ENCODE measurements at regions of chr17 and their contacts with region 1.

Region 1: GRCh38 chr17:39621523-39622379 is 5.0 kb upstream of the PPP1R1B start:
- DNase-seq: peak; percentile 100
- H3K4me3 Mint-ChIP-seq: peak overlapping the region; percentile 18
- H3K27ac Mint-ChIP-seq: peak overlapping the region; percentile 3
- H3K4me1 Mint-ChIP-seq: peaks cover 55% of the 10 kb centered on the region
- H3K27me3 Mint-ChIP-seq: peaks cover 83% of the 10 kb centered on the region
- CTCF ChIP-seq: no peak

Region 2: DNA sequence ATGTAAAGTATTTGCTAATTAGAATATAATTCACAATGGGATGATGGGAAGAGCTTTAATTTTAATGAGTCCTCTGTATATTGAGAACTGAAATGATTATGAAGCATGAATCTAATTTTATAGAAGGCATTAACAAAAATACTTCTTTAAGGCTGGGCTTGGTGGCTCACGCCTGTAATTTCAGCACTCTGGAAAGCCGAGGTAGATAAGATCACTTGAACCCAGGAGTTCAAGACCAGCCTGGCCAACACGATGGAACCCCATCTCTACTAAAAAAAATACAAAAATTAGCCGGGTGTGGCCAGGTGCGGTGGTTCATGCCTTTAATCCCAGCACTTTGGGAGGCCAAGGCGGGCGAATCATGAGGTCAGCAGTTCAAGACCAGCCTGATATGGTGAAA is 148.4 kb before region 1 on chr17:
- CTCF ChIA-PET with region 1: no interaction called
- intact Hi-C with region 1: no loop called
- DNase-seq: no peak
- H3K4me3 Mint-ChIP-seq: no peak overlapping the region
- H3K27ac Mint-ChIP-seq: no peak overlapping the region
- H3K4me1 Mint-ChIP-seq: no peaks in the 10 kb centered on the region
- H3K27me3 Mint-ChIP-seq: no peaks in the 10 kb centered on the region
- CTCF ChIP-seq: no peak

Region 3: GRCh38 chr17:39653662-39654331 is 32.0 kb after region 1 on chr17:
- CTCF ChIA-PET with region 1: interaction called, 42,089 read pairs
- intact Hi-C with region 1: loop called (anchors 1 kb)
- DNase-seq: peak; percentile 100
- H3K4me3 Mint-ChIP-seq: no peak overlapping the region
- H3K27ac Mint-ChIP-seq: no peak overlapping the region
- H3K4me1 Mint-ChIP-seq: peaks cover 23% of the 10 kb centered on the region
- H3K27me3 Mint-ChIP-seq: no peaks in the 10 kb centered on the region
- CTCF ChIP-seq: no peak

Region 4: GRCh38 chr17:39777534-39778365 is 156.0 kb after region 1 on chr17:
- CTCF ChIA-PET with region 1: interaction called, 1,121 read pairs
- intact Hi-C with region 1: loop called (anchors 1 kb)
- DNase-seq: no peak
- H3K4me3 Mint-ChIP-seq: no peak overlapping the region
- H3K27ac Mint-ChIP-seq: no peak overlapping the region
- H3K4me1 Mint-ChIP-seq: peaks cover 48% of the 10 kb centered on the region
- H3K27me3 Mint-ChIP-seq: no peaks in the 10 kb centered on the region
- CTCF ChIP-seq: no peak

Region 5: GRCh38 chr17:39852239-39852638 is 230.5 kb after region 1 on chr17:
- CTCF ChIA-PET with region 1: interaction called, 259 read pairs
- intact Hi-C with region 1: no loop called
- DNase-seq: peak; percentile 59
- H3K4me3 Mint-ChIP-seq: no peak overlapping the region
- H3K27ac Mint-ChIP-seq: no peak overlapping the region
- H3K4me1 Mint-ChIP-seq: peaks cover 10% of the 10 kb centered on the region
- H3K27me3 Mint-ChIP-seq: no peaks in the 10 kb centered on the region
- CTCF ChIP-seq: no peak

Region 6: GRCh38 chr17:40005520-40005919 is 383.8 kb after region 1 on chr17:
- CTCF ChIA-PET with region 1: interaction called, 14 read pairs
- intact Hi-C with region 1: no loop called
- DNase-seq: no peak
- H3K4me3 Mint-ChIP-seq: no peak overlapping the region
- H3K27ac Mint-ChIP-seq: no peak overlapping the region
- H3K4me1 Mint-ChIP-seq: no peaks in the 10 kb centered on the region
- H3K27me3 Mint-ChIP-seq: peaks cover 21% of the 10 kb centered on the region
- CTCF ChIP-seq: no peak

Region 7: DNA sequence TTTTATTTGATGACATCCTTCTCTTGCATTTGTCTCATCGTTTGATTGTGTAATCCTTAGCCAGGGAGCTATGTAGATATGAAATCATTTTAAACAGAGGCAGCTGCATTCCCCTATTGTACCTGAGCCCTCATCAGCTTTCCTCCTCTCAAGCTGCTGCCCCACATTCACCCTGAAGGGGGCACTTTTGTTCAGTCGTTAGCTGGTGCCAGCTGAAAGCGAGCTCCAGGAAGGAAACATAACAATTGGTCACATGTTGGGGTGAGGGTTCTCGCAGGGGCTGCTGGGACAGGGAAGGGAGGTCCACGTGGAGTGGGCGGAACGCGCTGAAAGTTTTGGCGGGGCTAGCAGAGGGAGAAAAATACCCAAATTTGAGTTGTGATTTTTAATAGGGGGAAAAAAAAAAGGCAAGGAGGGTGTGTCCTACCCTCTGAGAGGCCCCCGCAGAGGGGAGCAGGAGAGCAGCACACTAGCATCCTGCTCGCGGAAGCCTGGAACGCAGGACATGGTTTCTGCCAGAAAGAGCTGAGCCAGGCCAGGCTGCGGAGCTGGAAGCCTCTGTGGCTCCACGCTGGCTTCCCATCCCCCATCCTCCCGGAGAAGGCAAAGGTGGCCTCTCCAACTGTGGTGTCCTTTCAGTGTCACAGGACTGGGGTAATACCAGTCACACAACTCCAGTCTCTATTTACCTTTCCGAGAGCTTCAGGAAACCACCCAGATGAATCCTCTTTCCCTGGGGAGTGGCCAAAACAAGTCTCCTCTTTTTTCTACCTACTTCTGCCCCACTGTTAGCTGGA is 491.6 kb after region 1 on chr17:
- CTCF ChIA-PET with region 1: interaction called, 14 read pairs
- intact Hi-C with region 1: no loop called
- DNase-seq: peak; percentile 100
- H3K4me3 Mint-ChIP-seq: peak overlapping the region; percentile 65
- H3K27ac Mint-ChIP-seq: peak overlapping the region; percentile 74
- H3K4me1 Mint-ChIP-seq: peaks cover 58% of the 10 kb centered on the region
- H3K27me3 Mint-ChIP-seq: no peaks in the 10 kb centered on the region
- CTCF ChIP-seq: no peak

Region 8: GRCh38 chr17:40198576-40198975 is 576.8 kb after region 1 on chr17:
- CTCF ChIA-PET with region 1: no interaction called
- intact Hi-C with region 1: no loop called
- DNase-seq: no peak
- H3K4me3 Mint-ChIP-seq: peak overlapping the region; percentile 53
- H3K27ac Mint-ChIP-seq: no peak overlapping the region
- H3K4me1 Mint-ChIP-seq: peaks cover 7% of the 10 kb centered on the region
- H3K27me3 Mint-ChIP-seq: no peaks in the 10 kb centered on the region
- CTCF ChIP-seq: no peak

Region 9: DNA sequence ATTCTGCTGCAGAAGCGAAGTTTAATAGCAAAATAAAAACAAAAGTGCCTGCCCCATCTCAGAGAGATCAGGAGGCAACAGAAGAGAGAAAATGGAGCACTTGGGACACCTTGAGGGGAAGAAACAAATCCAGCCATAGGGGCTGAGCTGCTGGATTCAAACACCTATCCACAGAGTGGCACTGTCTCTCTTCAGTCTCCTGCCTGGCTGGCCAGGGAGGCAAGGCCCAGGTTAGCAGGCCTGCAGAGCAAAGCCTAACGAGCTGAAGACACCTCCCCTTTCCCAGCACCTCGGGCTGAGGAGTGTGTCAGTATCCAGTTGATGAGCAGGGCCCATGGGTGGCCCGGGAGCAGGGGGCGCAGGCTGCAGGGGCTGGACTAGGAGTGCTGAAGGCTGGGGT is 1784.5 kb after region 1 on chr17:
- CTCF ChIA-PET with region 1: no interaction called
- intact Hi-C with region 1: no loop called
- DNase-seq: peak; percentile 47
- H3K4me3 Mint-ChIP-seq: no peak overlapping the region
- H3K27ac Mint-ChIP-seq: no peak overlapping the region
- H3K4me1 Mint-ChIP-seq: peaks cover 44% of the 10 kb centered on the region
- H3K27me3 Mint-ChIP-seq: no peaks in the 10 kb centered on the region
- CTCF ChIP-seq: no peak